ENCODE measurements at regions of chr19 and their contacts with region 1.

Region 1: GRCh38 chr19:16324384-16325160 is at the start of gene KLF2:
- DNase-seq: peak; percentile 95 to 98 (median 96)
- H3K4me3 ChIP-seq: peak within 1 kb of the TSS; percentile 38 to 100
- H3K4me3 Mint-ChIP-seq: peak within 1 kb of the TSS; percentile 79 to 87 (median 83)
- H3K27ac ChIP-seq: peak within 1 kb of the TSS; percentile 95
- H3K27ac Mint-ChIP-seq: peak within 1 kb of the TSS; percentile 96 to 99 (median 98)
- H3K4me1 ChIP-seq: peaks cover 34% of the 10 kb centered on the region
- H3K4me1 Mint-ChIP-seq: peaks cover 15 to 64% (median 31%) of the 10 kb centered on the region in 4 donors
- H3K27me3 ChIP-seq: no peaks in the 10 kb centered on the region
- H3K27me3 Mint-ChIP-seq: peaks cover 0 to 7% of the 10 kb centered on the region in 2 donors
- total RNA-seq, gene KLF2: 425 to 437 TPM

Region 2: GRCh38 chr19:16076154-16076957 is 248.2 kb before region 1 on chr19 and contains the start of gene TPM4:
- CTCF ChIA-PET with region 1: no interaction called
- POLR2A ChIA-PET with region 1: interaction called, 29 read pairs
- intact Hi-C with region 1: loop called (anchors 5 kb)
- DNase-seq: peak; percentile 74 to 89 (median 76)
- H3K4me3 ChIP-seq: peak within 1 kb of the TSS; percentile 55 to 85
- H3K4me3 Mint-ChIP-seq: peak within 1 kb of the TSS; percentile 83 to 92 (median 91)
- H3K27ac ChIP-seq: peak within 1 kb of the TSS; percentile 91
- H3K27ac Mint-ChIP-seq: peak within 1 kb of the TSS; percentile 91 to 100 (median 99)
- H3K4me1 ChIP-seq: peaks cover 78% of the 10 kb centered on the region
- H3K4me1 Mint-ChIP-seq: peaks cover 42 to 83% (median 59%) of the 10 kb centered on the region in 4 donors
- H3K27me3 ChIP-seq: no peaks in the 10 kb centered on the region
- H3K27me3 Mint-ChIP-seq: no peaks in the 10 kb centered on the region
- total RNA-seq, gene TPM4: 94.7 to 96.8 TPM

Region 3: DNA sequence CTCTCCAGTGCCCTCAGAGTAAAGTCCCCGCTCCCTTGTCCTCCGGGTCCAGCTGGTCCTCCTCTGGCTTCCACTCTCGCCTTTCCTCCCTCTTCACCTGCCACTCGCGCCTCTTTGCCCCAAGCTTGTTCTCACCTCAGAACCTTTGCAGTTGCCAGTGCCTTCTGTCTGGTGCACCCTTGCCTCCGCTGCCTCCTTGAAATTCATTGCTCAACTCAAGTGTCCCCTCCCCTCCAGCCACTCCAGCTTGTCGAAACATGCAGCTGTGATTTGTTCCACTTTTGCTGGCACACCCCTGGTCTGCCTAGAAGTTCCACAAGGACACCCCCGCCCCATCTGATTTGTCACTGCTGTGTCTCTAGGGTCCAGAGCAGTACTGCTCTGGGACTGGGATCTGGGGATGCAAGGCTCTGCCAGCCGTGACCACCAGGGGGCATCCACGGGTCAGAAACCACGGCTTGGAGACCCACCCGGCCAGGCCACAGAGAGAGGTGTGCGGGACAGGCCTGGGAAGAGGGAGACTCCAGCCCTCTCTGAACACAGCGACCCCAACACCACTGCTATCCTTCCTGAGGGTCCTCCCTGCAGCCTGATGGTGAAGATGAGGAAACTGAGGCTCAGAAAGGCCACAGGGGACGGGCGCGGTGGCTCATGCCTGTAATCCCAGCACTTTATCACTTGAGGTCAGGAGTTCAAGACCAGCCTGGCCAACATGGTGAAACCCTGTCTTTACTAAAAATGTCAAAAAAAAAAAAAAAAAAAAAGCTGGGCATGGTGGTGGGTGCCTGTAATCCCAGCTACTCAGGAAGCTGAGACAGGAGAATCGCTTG is 77.0 kb before region 1 on chr19:
- CTCF ChIA-PET with region 1: interaction called, 45 read pairs
- POLR2A ChIA-PET with region 1: interaction called, 199 read pairs
- intact Hi-C with region 1: loop called (anchors 5 kb)
- DNase-seq: peak; percentile 71 to 80 (median 73)
- H3K4me3 ChIP-seq: no peak overlapping the region
- H3K4me3 Mint-ChIP-seq: peak overlapping the region in 6 of 8 donors; percentile 23 to 66 (median 54)
- H3K27ac ChIP-seq: no peak overlapping the region
- H3K27ac Mint-ChIP-seq: peak overlapping the region; percentile 61 to 84 (median 67)
- H3K4me1 ChIP-seq: peaks cover 17% of the 10 kb centered on the region
- H3K4me1 Mint-ChIP-seq: peaks cover 11 to 26% (median 21%) of the 10 kb centered on the region in 4 donors
- H3K27me3 ChIP-seq: no peaks in the 10 kb centered on the region
- H3K27me3 Mint-ChIP-seq: peaks cover 0 to 3% of the 10 kb centered on the region in 2 donors

Region 4: DNA sequence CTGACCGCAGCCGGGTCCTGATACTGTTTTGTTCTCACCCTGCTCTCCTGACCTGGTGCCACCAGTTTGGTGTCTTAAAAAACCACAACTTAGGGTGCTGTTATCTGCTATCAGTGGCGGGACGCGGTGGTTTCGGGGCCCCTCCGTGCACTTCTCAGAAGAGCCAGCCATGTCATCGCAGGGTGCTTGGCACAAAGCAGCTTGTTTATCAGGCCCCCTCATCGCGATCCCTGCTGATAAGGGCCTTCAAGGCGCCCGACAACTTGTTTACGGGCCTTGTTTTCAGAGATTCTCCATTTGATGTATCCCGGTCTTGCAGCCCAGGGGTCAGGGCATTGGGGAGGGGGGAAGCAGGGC is 58.0 kb before region 1 on chr19:
- CTCF ChIA-PET with region 1: no interaction called
- POLR2A ChIA-PET with region 1: interaction called, 342 read pairs
- intact Hi-C with region 1: loop called (anchors 5 kb)
- DNase-seq: peak; percentile 59 to 81 (median 70)
- H3K4me3 ChIP-seq: peak overlapping the region in 1 of 2 donors; percentile 14
- H3K4me3 Mint-ChIP-seq: peak overlapping the region in 7 of 8 donors; percentile 21 to 79 (median 67)
- H3K27ac ChIP-seq: peak overlapping the region; percentile 33
- H3K27ac Mint-ChIP-seq: peak overlapping the region; percentile 84 to 93 (median 89)
- H3K4me1 ChIP-seq: peaks cover 58% of the 10 kb centered on the region
- H3K4me1 Mint-ChIP-seq: peaks cover 39 to 68% (median 53%) of the 10 kb centered on the region in 4 donors
- H3K27me3 ChIP-seq: no peaks in the 10 kb centered on the region
- H3K27me3 Mint-ChIP-seq: no peaks in the 10 kb centered on the region

Region 5: GRCh38 chr19:16338470-16339360 is 14.1 kb after region 1 on chr19:
- CTCF ChIA-PET with region 1: interaction called, 26 read pairs
- POLR2A ChIA-PET with region 1: interaction called, 611 read pairs
- intact Hi-C with region 1: no loop called
- DNase-seq: peak; percentile 29 to 73 (median 46)
- H3K4me3 ChIP-seq: peak overlapping the region; percentile 48
- H3K4me3 Mint-ChIP-seq: peak overlapping the region; percentile 83 to 97 (median 90)
- H3K27ac ChIP-seq: peak overlapping the region; percentile 66
- H3K27ac Mint-ChIP-seq: peak overlapping the region; percentile 78 to 99 (median 96)
- H3K4me1 ChIP-seq: peaks cover 70% of the 10 kb centered on the region
- H3K4me1 Mint-ChIP-seq: peaks cover 41 to 77% (median 56%) of the 10 kb centered on the region in 4 donors
- H3K27me3 ChIP-seq: no peaks in the 10 kb centered on the region
- H3K27me3 Mint-ChIP-seq: no peaks in the 10 kb centered on the region